ENCODE measurements at regions of chr6 and their contacts with region 1.

Region 1: DNA sequence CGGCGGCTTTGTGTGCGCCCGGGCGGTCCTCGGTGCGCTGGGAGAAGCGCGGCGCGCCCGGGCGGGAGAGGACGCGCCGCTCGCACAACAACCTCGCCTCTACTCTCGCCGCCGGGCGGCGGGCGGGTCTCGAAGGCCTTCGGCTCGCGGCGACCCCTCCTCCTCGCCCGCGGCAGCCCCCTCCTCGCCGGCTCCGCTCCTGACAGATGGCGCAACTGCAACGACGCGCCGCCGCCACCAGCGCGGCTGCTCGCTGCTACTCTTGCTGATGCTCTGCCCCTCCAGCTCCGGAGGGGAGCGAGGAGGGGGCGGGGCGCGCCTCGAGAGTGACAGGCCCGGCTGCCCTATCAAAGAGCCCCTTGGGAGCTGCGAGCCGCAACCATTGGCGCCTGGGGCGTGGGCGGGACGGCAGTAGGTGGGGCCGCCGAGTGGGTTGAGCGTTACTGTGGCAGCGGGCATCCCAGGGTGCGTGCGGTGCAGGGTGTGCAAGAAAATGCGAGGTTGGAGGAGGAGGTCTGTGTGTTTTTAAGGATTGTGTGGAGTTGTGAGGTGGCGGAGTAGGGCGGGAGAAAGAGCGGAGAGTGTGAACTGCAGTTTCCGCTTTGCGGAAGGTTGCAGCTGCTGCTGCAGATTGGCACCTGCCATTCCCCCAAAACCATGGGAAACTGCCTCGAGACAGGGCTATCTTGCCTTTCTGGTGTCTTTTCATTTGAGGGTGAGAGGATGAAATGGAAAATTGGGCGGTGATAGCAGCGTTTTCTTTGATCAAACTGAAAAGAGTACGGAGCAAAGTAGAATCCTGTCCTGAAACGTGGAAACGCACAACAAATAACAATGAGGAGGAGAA is at the start of gene FYN:
- DNase-seq: peak; percentile 97
- H3K4me3 ChIP-seq: peak within 1 kb of the TSS; percentile 79
- H3K27ac ChIP-seq: peak within 1 kb of the TSS; percentile 64
- H3K4me1 ChIP-seq: peaks cover 31% of the 10 kb centered on the region
- CTCF ChIP-seq: peak; percentile 17; the same call in 1 of the 2 replicates
- total RNA-seq, gene FYN: 57.3 and 65.3 TPM in 2 replicates

Region 2: DNA sequence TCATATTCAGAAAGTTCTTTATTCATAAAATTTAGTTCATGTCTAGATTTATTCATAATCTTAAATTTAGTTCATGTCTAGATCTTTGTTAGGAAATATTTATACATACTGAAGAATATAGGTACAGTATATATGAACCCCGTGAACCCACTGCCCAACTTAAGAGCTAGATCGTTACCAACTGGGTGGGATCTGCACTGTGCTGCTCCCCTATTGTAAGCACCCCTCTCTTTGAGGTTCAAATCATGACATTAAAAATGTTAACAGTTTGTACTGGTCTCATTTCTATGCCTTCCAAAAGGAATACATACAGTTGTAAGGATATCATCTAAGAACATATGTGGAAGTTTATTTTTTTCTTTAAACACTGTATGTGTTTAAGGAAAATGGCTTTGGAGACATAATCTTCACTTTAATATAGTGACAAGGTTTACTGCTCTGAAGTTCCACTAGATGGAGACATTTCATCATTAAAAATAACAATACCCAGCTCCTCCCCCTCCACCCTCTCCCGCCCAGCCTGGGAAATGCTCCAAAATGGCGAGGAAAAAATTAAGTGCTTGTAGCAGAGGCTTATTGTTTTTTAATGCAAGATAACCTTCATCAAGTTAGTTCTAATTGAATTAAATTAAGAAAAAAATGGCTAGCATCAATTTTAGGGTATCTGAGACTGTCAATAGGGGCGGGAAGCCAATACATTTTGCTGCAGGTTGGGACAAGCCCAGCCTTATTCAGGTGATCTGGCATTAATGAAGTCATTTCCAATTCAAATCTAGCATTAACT is 163.6 kb before region 1 on chr6:
- CTCF ChIA-PET with region 1: no interaction called
- POLR2A ChIA-PET with region 1: interaction called, 6 read pairs
- intact Hi-C with region 1: loop called (anchors 2 kb)
- DNase-seq: peak; percentile 74
- H3K4me3 ChIP-seq: no peak overlapping the region
- H3K27ac ChIP-seq: no peak overlapping the region
- H3K4me1 ChIP-seq: peaks cover 3% of the 10 kb centered on the region
- CTCF ChIP-seq: peak; percentile 95

Region 3: GRCh38 chr6:111721753-111722154 is 151.6 kb before region 1 on chr6:
- CTCF ChIA-PET with region 1: no interaction called
- POLR2A ChIA-PET with region 1: no interaction called
- intact Hi-C with region 1: loop called (anchors 1 kb)
- DNase-seq: peak; percentile 55
- H3K4me3 ChIP-seq: no peak overlapping the region
- H3K27ac ChIP-seq: no peak overlapping the region
- H3K4me1 ChIP-seq: peaks cover 38% of the 10 kb centered on the region
- CTCF ChIP-seq: peak; percentile 83

Region 4: DNA sequence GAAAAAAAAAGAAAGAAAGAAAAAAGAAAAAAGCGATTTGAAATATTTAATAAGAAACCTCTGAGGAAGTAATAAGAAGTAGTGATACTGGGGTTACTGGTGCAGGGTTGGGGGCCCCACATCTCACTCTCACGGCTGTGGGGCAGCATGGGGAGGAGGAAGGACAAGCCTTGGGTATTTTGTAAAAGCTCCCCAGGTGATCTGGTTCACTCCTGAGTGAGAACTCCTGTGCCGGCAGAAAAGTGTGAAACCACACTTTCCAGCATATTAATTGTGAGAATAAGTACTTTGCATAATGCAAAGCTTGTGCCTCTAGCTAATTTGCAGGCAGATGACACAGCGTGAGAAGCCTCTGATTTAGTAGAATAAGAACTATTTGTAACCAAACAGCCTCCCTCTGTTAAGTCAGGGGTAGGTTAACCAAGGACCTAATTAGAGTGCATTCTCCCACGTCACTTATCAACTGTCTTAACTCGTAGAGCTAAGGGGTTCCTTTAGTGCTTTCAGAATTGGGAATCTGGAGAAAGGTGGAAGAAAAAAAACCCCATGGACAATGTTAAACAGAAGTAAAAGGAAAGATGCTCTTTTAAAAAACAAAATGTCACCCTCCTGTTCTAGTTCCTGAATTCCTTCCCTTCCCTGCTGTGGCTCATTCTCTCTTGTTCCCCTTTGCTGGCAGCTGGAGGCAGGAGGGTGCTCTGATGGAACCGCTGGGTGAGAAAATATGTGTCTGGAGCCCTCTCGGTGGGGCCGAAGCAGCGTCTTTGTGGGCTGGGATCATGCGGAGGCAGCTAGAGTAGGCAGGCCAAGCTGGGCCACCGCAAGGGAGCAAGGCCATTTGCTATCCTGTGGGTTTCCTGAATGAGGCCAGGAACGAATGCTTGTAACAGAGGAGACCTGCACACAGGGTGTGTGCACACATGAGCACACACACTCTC is 108.9 kb before region 1 on chr6:
- CTCF ChIA-PET with region 1: no interaction called
- POLR2A ChIA-PET with region 1: interaction called, 7 read pairs
- intact Hi-C with region 1: loop called (anchors 1 kb)
- DNase-seq: peak; percentile 26
- H3K4me3 ChIP-seq: peak overlapping the region; percentile 3
- H3K27ac ChIP-seq: peak overlapping the region; percentile 96
- H3K4me1 ChIP-seq: peaks cover 82% of the 10 kb centered on the region
- CTCF ChIP-seq: no peak

Region 5: DNA sequence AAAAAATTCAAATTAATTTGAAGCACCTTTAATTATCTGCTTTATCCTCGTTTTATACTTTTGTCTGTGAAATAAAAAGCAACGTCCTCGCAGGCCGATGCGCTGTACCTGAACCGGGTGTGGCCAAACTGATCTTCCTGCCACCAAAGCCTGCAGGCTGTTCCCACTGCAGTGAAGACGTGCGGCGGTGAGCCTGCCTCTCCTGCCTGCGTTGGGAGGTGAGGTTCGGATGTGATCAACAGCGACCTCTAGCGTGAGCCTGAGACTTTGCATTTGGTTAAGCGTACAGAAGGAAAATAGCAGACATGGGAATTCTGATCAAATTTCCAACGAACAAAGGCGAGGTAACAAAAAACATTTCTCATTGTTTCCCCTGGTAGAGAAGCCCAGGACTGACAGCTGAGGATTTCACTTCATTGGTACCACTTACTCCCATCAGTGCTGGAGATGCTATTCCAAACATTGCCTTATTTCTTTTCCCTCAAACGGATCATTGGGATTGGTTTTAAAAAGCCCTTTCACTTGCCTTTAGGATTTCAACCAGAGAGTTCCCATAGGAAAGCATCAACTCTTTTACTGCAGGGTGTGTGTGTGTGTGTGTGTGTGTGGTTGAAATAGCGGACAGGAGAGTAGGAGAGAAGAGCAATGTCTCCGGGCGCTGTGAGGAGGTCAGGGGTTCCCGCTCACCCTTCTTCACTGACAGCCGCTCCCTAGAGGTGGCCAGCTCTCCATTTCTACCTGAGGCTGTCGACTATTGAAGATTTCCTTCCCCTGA is 123.9 kb after region 1 on chr6:
- CTCF ChIA-PET with region 1: no interaction called
- POLR2A ChIA-PET with region 1: no interaction called
- intact Hi-C with region 1: loop called (anchors 2 kb)
- DNase-seq: peak; percentile 79
- H3K4me3 ChIP-seq: no peak overlapping the region
- H3K27ac ChIP-seq: no peak overlapping the region
- H3K4me1 ChIP-seq: no peaks in the 10 kb centered on the region
- CTCF ChIP-seq: peak; percentile 97

Region 6: GRCh38 chr6:112043032-112044007 is 169.9 kb after region 1 on chr6:
- CTCF ChIA-PET with region 1: no interaction called
- POLR2A ChIA-PET with region 1: no interaction called
- intact Hi-C with region 1: loop called (anchors 2 kb)
- DNase-seq: peak; percentile 94
- H3K4me3 ChIP-seq: peak overlapping the region; percentile 70
- H3K27ac ChIP-seq: peak overlapping the region; percentile 75
- H3K4me1 ChIP-seq: peaks cover 6% of the 10 kb centered on the region
- CTCF ChIP-seq: peak; percentile 97

Measured in OCI-LY7 (cell line).